ENCODE measurements at regions of chr20 and their contacts with region 1.

Region 1: DNA sequence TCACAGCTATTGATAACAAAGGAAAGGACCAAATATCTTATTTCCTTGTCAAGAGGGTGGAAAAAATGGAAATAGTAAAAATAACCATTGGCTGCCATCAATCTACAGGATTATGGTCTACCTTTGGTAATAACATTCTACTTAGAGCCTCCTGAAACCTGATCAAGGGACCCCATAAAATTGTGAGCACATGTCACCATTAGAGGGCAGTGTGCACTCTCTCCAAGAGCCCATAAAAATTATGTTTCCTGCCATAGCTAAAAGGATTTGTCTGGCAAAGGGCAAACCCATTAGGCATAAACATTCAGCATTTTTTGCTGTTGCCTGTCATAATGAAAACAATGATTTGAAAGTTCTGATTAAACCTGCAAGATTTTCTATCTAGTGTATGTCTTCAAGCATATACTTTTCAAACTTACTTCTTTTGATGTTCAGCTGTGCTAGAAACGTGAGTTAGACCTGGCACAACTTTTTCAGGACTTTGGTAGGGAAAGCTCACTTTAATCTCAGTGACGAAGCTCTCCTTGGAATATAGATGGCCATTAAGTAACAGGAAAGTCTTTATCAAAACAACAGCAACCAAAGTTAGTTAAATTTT is 120.7 kb upstream of the ZFP64 start:
- DNase-seq: peak; percentile 11 to 79 (median 53)
- ATAC-seq: no peak
- H3K4me3 ChIP-seq: no peak overlapping the region
- H3K4me3 Mint-ChIP-seq: no peak overlapping the region
- H3K27ac ChIP-seq: no peak overlapping the region
- H3K27ac Mint-ChIP-seq: no peak overlapping the region
- H3K4me1 ChIP-seq: peaks cover 20% of the 10 kb centered on the region
- H3K4me1 Mint-ChIP-seq: peaks cover 21% of the 10 kb centered on the region
- H3K27me3 ChIP-seq: peaks cover 0 to 2% of the 10 kb centered on the region in 2 experiments
- H3K27me3 Mint-ChIP-seq: no peaks in the 10 kb centered on the region
- CTCF ChIP-seq: peak; percentile 93

Region 2: DNA sequence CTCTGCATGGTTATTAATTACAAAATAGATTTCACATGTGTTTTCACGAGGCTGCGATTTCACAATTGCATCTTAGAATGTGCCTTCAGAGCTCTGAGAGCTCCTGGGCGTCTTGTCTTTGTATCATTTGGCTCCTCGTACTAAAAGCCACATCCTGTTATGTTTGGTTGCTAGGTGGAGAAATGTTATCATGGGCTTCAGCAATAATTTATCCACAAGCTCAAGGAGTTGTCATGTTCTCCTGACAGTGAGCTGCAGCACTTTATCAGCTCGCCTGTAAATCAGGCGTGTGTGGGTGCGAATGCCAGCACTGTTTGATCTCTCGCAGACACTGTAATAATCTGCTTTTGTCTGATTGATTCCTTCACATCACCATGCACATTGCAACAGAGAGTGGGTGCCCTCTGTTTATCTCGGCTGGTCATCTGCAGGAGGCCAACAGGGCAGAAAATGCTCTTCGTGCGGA is 98.0 kb after region 1 on chr20:
- CTCF ChIA-PET with region 1: interaction called, 18 read pairs
- POLR2A ChIA-PET with region 1: no interaction called
- intact Hi-C with region 1: no loop called
- DNase-seq: peak; percentile 37 to 94 (median 64)
- ATAC-seq: peak; percentile 88
- H3K4me3 ChIP-seq: peak overlapping the region in 1 of 2 experiments; percentile 15
- H3K4me3 Mint-ChIP-seq: peak overlapping the region; percentile 59
- H3K27ac ChIP-seq: peak overlapping the region; percentile 84 to 93
- H3K27ac Mint-ChIP-seq: peak overlapping the region; percentile 94
- H3K4me1 ChIP-seq: peaks cover 73% of the 10 kb centered on the region
- H3K4me1 Mint-ChIP-seq: peaks cover 75% of the 10 kb centered on the region
- H3K27me3 ChIP-seq: no peaks in the 10 kb centered on the region
- H3K27me3 Mint-ChIP-seq: no peaks in the 10 kb centered on the region
- CTCF ChIP-seq: no peak

Region 3: GRCh38 chr20:53032478-53032932 is 720.3 kb after region 1 on chr20:
- CTCF ChIA-PET with region 1: interaction called, 6 read pairs
- POLR2A ChIA-PET with region 1: no interaction called
- intact Hi-C with region 1: loop called (anchors 1 to 10 kb)
- DNase-seq: no peak
- ATAC-seq: no peak
- H3K4me3 ChIP-seq: no peak overlapping the region
- H3K4me3 Mint-ChIP-seq: no peak overlapping the region
- H3K27ac ChIP-seq: no peak overlapping the region
- H3K27ac Mint-ChIP-seq: no peak overlapping the region
- H3K4me1 ChIP-seq: peaks cover 3% of the 10 kb centered on the region
- H3K4me1 Mint-ChIP-seq: peaks cover 12% of the 10 kb centered on the region
- H3K27me3 ChIP-seq: no peaks in the 10 kb centered on the region
- H3K27me3 Mint-ChIP-seq: peaks cover 16% of the 10 kb centered on the region
- CTCF ChIP-seq: no peak

Region 4: DNA sequence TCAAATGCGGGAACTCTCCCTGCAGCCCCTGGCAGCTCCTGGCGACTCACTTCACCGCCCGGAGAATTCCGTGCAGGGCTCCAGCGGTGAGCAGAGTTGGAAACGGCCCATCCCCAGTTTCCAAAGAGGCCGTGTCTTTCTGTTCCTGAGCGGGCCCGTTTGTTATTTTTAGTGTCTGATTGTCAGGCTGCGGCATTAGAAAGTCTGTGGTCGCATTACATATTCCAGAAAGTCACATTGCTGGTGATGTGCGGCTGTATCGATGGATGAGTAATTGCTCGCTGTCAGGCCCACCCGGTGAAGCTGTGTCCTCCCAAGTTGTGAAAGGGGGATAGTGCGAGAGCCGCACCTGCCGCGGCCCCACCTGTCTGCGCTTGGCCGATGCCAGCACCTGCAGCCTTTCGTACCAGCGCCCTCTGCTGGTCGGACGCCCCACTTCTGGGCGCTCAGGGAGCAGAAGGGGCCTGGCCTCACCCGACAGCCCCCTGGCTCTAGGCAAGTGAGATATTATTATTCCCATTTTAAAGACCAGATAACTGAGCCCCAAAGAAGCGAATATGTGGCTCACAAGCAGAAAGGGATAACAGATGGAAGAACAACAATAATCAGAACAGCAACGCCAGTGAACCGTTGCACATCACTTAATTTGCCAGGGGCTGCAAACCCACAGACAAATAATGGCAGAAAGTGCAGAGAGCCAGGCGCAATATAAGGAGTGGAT is 904.8 kb after region 1 on chr20:
- CTCF ChIA-PET with region 1: interaction called, 72 read pairs
- POLR2A ChIA-PET with region 1: interaction called, 4 read pairs
- intact Hi-C with region 1: loop called (anchors 1 kb)
- DNase-seq: peak; percentile 72 to 92 (median 80)
- ATAC-seq: peak; percentile 89
- H3K4me3 ChIP-seq: peak overlapping the region in 1 of 2 experiments; percentile 13
- H3K4me3 Mint-ChIP-seq: peak overlapping the region; percentile 60
- H3K27ac ChIP-seq: no peak overlapping the region
- H3K27ac Mint-ChIP-seq: no peak overlapping the region
- H3K4me1 ChIP-seq: peaks cover 22% of the 10 kb centered on the region
- H3K4me1 Mint-ChIP-seq: peaks cover 18% of the 10 kb centered on the region
- H3K27me3 ChIP-seq: no peaks in the 10 kb centered on the region
- H3K27me3 Mint-ChIP-seq: peaks cover 11% of the 10 kb centered on the region
- CTCF ChIP-seq: peak; percentile 97

Region 5: DNA sequence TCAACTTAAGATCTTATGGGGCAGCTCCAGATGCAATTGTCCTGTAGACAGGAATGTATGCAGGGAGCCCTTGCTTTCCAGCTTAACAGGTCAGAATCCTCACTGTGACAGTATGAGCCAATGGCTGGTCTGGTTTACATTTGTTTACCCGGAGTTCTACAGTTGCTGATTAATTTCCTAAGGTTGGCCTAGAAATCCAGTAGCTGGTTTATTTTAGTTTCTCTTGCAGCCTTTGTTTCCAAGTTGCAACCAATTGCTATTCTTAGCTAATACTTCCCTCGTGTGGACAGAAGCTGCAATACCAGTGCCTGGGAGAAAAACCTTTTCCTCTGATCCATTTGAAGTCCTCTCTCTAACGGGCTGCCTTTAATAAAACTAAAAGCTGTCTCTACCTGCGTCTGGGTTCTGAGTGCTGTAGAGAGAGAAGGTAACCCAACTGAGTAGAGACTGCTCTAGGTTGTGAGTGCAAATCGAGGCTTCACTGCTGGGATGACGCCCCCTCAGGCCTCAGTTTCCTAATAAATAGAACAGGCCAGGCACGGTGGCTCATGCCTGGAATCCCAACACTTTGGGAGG is 1235.5 kb after region 1 on chr20:
- CTCF ChIA-PET with region 1: interaction called, 12 read pairs
- POLR2A ChIA-PET with region 1: no interaction called
- intact Hi-C with region 1: loop called (anchors 2 to 10 kb)
- DNase-seq: peak in 6 of 9 experiments; percentile 17 to 60 (median 38)
- ATAC-seq: peak; percentile 51
- H3K4me3 ChIP-seq: no peak overlapping the region
- H3K4me3 Mint-ChIP-seq: no peak overlapping the region
- H3K27ac ChIP-seq: no peak overlapping the region
- H3K27ac Mint-ChIP-seq: no peak overlapping the region
- H3K4me1 ChIP-seq: no peaks in the 10 kb centered on the region
- H3K4me1 Mint-ChIP-seq: peaks cover 5% of the 10 kb centered on the region
- H3K27me3 ChIP-seq: no peaks in the 10 kb centered on the region
- H3K27me3 Mint-ChIP-seq: no peaks in the 10 kb centered on the region
- CTCF ChIP-seq: peak; percentile 67

Region 6: DNA sequence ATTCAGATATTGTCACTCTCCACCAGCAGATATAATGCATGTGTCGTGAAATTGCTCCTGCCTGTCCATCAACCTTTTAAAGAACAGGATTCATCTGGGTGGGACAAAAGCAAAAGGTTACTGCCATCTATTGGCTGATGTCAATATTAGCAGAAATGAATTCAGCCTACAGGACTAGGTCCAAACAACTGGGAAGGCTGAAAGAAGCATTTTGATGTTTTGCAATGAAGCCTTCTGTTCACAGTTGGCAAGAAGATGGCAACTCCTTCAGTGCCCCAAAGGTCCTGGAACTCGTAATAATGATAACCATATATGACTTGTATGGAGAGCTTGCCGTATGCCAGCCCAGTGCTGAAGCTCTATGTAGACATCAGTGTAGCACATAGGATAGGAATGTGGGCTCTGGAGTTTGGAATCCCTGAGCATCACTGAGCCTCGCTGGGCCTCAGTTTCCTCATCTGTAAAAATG is 1750.6 kb after region 1 on chr20:
- CTCF ChIA-PET with region 1: interaction called, 13 read pairs
- POLR2A ChIA-PET with region 1: no interaction called
- intact Hi-C with region 1: loop called in 1 of 2 experiments (anchors 1 kb)
- DNase-seq: peak in 2 of 9 experiments; percentile 40 to 60
- ATAC-seq: no peak
- H3K4me3 ChIP-seq: no peak overlapping the region
- H3K4me3 Mint-ChIP-seq: no peak overlapping the region
- H3K27ac ChIP-seq: no peak overlapping the region
- H3K27ac Mint-ChIP-seq: no peak overlapping the region
- H3K4me1 ChIP-seq: peaks cover 24% of the 10 kb centered on the region
- H3K4me1 Mint-ChIP-seq: no peaks in the 10 kb centered on the region
- H3K27me3 ChIP-seq: no peaks in the 10 kb centered on the region
- H3K27me3 Mint-ChIP-seq: no peaks in the 10 kb centered on the region
- CTCF ChIP-seq: peak; percentile 53

Measured in CD8-positive, alpha-beta T cell (primary cell).